Vagina (tissue), 2 donors: ENCODE measurements at regions of chr3 and their contacts with region 1.

Region 1: DNA sequence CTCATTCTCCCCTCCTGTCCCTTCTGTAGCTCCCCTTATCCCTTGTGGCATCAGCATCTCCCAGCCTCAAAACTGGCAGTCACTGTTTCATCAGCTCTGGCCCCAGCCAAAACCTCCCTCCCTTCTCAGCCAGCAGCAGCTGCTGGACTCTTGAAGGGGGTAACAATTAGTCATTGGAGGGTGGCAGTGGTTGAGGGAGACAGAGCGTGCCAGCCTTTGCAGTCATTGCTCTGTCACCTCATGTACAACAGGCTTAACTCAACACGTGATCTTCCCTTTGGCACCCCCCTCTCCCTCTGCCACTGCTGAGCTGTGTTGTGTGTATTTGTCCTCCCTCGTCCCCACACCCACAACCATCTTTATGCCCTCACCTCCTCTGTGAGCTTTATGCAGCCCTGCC is 28.2 kb downstream of the RBP2 start:
- DNase-seq: no peak
- H3K4me3 ChIP-seq: no peak overlapping the region
- H3K27ac ChIP-seq: no peak overlapping the region
- H3K4me1 ChIP-seq: no peaks in the 10 kb centered on the region
- H3K27me3 ChIP-seq: no peaks in the 10 kb centered on the region
- CTCF ChIP-seq: no peak
- POLR2A ChIP-seq: no peak

Region 2: GRCh38 chr3:139559541-139559940 is 111.4 kb after region 1 on chr3:
- intact Hi-C with region 1: loop called (anchors 10 kb)
- DNase-seq: no peak
- H3K4me3 ChIP-seq: no peak overlapping the region
- H3K27ac ChIP-seq: no peak overlapping the region
- H3K4me1 ChIP-seq: no peaks in the 10 kb centered on the region
- H3K27me3 ChIP-seq: no peaks in the 10 kb centered on the region
- CTCF ChIP-seq: no peak
- POLR2A ChIP-seq: no peak